Posterior cingulate gyrus (tissue), 11 donors: ENCODE measurements at regions of chr10 and their contacts with region 1.

Region 1: DNA sequence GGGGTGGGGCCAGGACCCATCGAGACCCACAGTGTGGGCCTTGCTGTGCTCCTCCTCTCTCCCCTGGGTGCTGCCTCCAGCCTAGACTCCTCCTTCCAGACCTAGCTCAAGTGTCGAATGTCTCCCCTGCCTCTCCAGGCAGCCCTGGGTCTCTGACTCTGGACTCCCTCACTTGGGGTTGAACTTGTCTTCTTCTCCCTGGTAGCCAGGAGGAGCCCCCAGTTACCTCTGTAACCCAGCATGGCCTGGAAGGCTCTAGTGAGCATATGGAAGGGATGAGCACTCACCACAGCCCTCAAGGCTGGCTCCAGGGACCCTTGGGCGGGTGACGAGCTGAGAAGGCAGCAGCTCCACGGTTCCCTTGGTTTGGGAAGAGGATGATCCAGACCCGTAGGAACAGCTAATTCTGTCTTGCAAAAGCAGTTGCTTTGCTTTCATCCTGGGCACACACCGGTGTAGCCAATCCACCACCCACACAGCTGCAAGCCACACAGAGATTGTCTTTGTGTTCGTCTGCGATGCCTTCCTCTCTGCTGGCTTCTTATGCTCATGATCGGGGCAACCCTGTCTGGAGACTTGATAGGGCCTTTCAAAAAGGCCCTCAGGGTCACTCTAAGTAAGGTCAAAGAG is 52.3 kb upstream of the ANTXRL start:
- DNase-seq: peak in 3 of 10 donors; percentile 41 to 72 (median 54)

Region 2: DNA sequence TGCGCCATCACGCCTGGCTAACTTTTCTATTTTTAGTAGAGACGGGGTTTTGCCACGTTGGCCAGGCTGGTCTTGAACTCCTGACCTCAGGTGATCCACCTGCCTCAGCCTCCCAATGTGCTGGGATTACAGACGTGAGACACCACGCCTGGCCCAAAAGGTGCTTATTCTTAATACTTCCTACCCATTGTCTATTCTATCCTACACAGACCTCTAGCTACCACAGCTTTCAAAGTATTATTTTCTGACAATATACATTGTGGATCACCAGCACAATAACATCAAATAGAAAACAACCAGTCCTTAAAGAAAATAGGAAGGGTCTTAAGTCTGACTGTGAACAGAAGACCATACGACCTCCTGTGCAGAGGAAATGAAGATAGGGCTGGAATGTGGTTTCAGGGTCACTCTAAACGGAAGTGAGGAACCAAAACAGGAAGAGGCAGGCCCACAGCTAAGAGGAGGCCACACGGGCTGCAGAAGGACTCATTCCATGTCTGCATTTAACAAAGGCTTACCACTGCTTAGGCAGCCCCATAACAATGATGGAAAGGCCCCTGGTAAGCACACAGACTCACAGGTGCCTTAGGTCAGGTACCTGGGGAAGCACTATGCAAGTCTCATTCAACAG is 677.2 kb before region 1 on chr10:
- intact Hi-C with region 1: no loop called
- DNase-seq: no peak

Region 3: DNA sequence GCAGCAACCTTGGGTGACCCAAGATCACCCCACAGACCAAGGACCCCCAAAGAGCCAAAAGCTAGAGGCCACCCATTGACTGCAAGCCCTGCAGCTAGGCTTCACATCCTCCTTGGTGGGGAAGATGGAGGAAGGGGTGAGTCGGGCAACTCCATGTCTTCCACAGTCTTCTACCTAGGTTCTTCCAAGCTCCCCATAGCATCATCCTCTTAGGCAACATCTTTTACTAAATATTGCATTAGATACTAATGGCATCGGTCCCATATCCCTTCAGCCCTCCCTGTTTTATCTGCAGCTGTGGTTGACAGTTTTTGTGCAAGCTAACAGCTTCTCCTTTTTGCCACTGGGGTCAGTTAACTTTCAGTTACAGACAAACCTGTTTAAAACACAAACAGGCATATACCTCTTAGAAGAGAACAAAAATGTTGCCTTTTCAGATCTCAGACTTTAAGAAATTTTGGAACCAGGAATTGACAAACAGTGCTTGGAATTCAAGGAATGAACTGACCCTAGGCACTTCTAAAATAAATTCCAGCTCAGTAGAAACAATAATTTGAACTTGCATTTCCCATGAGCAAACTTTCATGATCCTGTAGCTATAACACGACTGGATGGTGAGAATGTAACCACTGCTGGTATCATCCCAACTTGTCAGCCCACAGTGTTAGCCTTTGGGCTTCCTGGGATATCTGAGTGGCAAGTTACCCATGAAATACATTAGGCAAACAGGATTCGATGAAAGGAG is 154.5 kb before region 1 on chr10:
- intact Hi-C with region 1: no loop called
- DNase-seq: no peak

Region 4: GRCh38 chr10:46325023-46325422 is 90.5 kb after region 1 on chr10:
- intact Hi-C with region 1: loop called (anchors 5 kb)
- DNase-seq: no peak

Region 5: GRCh38 chr10:47176903-47177868 is 942.6 kb after region 1 on chr10:
- intact Hi-C with region 1: no loop called
- DNase-seq: no peak